ENCODE measurements at regions of chr13 and their contacts with region 1.

Region 1: GRCh38 chr13:20566898-20567874 is at the start of gene IFT88:
- DNase-seq: peak; percentile 84 to 98 (median 88)

Region 2: GRCh38 chr13:19567820-19568534 is 999.2 kb before region 1 on chr13:
- intact Hi-C with region 1: no loop called
- DNase-seq: no peak

Region 3: GRCh38 chr13:20525690-20526544 is 41.3 kb before region 1 on chr13 and contains the start of gene CRYL1:
- intact Hi-C with region 1: loop called (anchors 1 kb)
- DNase-seq: peak; percentile 73 to 97 (median 85)

Region 4: GRCh38 chr13:20703780-20704445 is 136.7 kb after region 1 on chr13:
- intact Hi-C with region 1: loop called (anchors 5 kb)
- DNase-seq: peak; percentile 53 to 96 (median 67)

Region 5: GRCh38 chr13:20773194-20774080 is 206.3 kb after region 1 on chr13 and contains the start of gene EEF1AKMT1:
- intact Hi-C with region 1: loop called (anchors 10 kb)
- DNase-seq: peak; percentile 80 to 98 (median 88)